Stomach (tissue), 19 donors: ENCODE measurements at regions of chr11 and their contacts with region 1.

Region 1: GRCh38 chr11:65625628-65626342 is 10.2 kb downstream of the PCNX3 start:
- DNase-seq: peak; percentile 76 to 83
- H3K4me3 ChIP-seq: no peak overlapping the region
- H3K27ac ChIP-seq: no peak overlapping the region
- H3K4me1 ChIP-seq: peaks cover 0 to 12% (median 4%) of the 10 kb centered on the region in 4 donors
- H3K27me3 ChIP-seq: no peaks in the 10 kb centered on the region
- CTCF ChIP-seq: peak in 5 of 7 experiments; percentile 51 to 80 (median 70)
- EP300 ChIP-seq: no peak
- POLR2A ChIP-seq: no peak

Region 2: DNA sequence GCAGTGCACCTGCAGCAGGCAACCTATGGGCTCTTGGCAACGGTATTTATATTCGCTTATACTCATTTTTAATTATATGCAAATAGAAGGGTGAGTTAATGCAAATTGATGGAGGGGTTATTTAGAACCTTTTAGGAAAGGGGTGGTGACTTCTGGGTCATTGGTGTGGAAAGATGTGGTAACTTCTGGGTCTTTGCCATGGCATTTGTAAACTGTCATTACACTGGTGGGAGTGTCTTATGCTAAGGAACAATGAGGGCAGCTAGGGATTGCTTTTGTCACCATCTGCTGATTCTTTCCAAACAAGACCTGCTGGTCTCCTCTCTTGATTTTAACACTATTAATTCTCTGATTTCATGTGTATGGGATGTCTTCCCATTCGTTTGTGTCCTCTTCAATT is 74.6 kb after region 1 on chr11:
- intact Hi-C with region 1: loop called (anchors 10 kb)
- DNase-seq: no peak
- H3K4me3 ChIP-seq: no peak overlapping the region
- H3K27ac ChIP-seq: no peak overlapping the region
- H3K4me1 ChIP-seq: peaks cover 3 to 16% (median 13%) of the 10 kb centered on the region in 4 donors
- H3K27me3 ChIP-seq: no peaks in the 10 kb centered on the region
- CTCF ChIP-seq: no peak
- EP300 ChIP-seq: no peak
- POLR2A ChIP-seq: no peak

Region 3: DNA sequence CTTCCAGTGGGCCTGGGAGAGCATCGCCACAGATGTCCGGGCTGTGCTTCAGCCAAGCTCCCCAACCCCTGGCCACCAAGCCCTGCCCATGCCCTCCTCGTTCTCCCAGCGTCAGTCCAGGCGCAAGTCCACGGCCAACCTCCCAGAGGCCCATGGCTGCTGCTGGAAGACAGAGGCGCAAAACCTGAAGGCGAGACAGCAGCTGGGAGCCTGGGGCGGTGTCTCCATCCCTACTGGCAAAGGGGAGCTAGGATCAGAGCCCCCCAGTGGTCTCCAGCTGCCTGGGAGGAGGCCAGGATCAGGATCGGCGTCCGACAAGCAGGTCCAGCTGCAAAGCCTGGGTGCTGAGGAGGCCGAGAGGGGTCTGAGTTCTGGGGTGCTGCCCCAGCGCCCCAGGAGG is 321.4 kb after region 1 on chr11:
- intact Hi-C with region 1: no loop called
- DNase-seq: no peak
- H3K4me3 ChIP-seq: no peak overlapping the region
- H3K27ac ChIP-seq: no peak overlapping the region
- H3K4me1 ChIP-seq: no peaks in the 10 kb centered on the region
- H3K27me3 ChIP-seq: peaks cover 0 to 13% (median 0%) of the 10 kb centered on the region in 3 donors
- CTCF ChIP-seq: no peak
- EP300 ChIP-seq: no peak
- POLR2A ChIP-seq: no peak